ENCODE measurements at regions of chr3 and their contacts with region 1.

Region 1: DNA sequence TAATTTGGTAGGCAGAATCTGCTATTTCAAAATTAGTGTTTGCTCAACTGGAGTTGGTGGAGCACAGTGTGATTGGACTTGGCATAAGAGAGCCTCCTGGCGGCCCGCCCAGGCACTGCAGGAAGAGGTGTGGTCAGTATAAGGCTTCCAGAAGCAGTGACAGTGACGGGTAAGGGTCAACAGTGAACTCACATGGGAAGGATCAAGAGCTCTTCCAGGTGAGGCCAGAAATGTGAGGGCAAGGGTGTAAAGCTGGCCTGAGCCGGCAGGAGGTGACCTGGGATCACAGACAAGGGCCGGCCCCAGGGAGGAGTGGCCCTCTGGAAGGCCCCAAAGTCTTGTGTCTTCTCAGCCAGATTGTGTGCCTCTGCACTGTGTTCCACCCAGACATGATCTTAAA is 93.2 kb upstream of the RNF7 start:
- DNase-seq: peak; percentile 60
- ATAC-seq: peak; percentile 91
- H3K4me3 ChIP-seq: no peak overlapping the region
- H3K27ac ChIP-seq: no peak overlapping the region
- H3K4me1 ChIP-seq: peaks cover 0 to 9% of the 10 kb centered on the region in 2 experiments; a peak in 1 of 4 replicates
- H3K27me3 ChIP-seq: no peaks in the 10 kb centered on the region
- CTCF ChIP-seq: peak; percentile 52 to 94 (median 93); a peak in 5 of 6 replicates
- POLR2A ChIP-seq: no peak
- RAD21 ChIP-seq: peak; percentile 74

Region 2: GRCh38 chr3:141460097-141460704 is 184.7 kb before region 1 on chr3:
- CTCF ChIA-PET with region 1: interaction called, 4 read pairs
- POLR2A ChIA-PET with region 1: no interaction called
- RAD21 ChIA-PET with region 1: no interaction called
- intact Hi-C with region 1: loop called (anchors 10 kb)
- DNase-seq: peak; percentile 75
- ATAC-seq: peak; percentile 100
- H3K4me3 ChIP-seq: no peak overlapping the region
- H3K27ac ChIP-seq: no peak overlapping the region
- H3K4me1 ChIP-seq: peaks cover 0 to 5% of the 10 kb centered on the region in 2 experiments; a peak in 2 of 4 replicates
- H3K27me3 ChIP-seq: no peaks in the 10 kb centered on the region
- CTCF ChIP-seq: peak; percentile 88 to 90 (median 90)
- POLR2A ChIP-seq: no peak
- RAD21 ChIP-seq: peak; percentile 96

Region 3: DNA sequence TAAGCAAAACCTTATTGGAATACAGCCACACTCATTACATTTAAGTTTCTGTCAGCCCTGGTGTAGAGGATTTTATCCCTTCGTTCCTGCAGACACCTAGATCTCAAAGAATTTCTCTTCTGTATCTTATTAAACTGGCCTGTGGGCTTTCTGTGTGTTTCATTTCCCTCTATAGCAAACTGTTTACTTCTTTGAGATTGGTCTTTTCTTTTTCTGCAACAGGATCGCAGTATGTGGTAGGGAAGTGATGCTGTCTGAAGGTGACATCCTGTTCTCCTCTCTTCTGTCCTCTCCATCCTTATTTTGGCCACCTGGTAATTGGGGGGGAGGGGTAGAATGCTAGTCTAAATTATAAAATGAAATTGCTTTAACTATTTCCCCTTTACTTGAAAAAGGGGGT is 257.0 kb after region 1 on chr3:
- CTCF ChIA-PET with region 1: no interaction called
- POLR2A ChIA-PET with region 1: no interaction called
- RAD21 ChIA-PET with region 1: no interaction called
- intact Hi-C with region 1: no loop called
- DNase-seq: no peak
- ATAC-seq: no peak
- H3K4me3 ChIP-seq: no peak overlapping the region
- H3K27ac ChIP-seq: no peak overlapping the region
- H3K4me1 ChIP-seq: no peaks in the 10 kb centered on the region
- H3K27me3 ChIP-seq: no peaks in the 10 kb centered on the region
- CTCF ChIP-seq: no peak
- POLR2A ChIP-seq: no peak
- RAD21 ChIP-seq: no peak

Region 4: GRCh38 chr3:141913150-141913811 is 268.4 kb after region 1 on chr3:
- CTCF ChIA-PET with region 1: no interaction called
- POLR2A ChIA-PET with region 1: no interaction called
- RAD21 ChIA-PET with region 1: no interaction called
- intact Hi-C with region 1: loop called (anchors 10 kb)
- DNase-seq: peak; percentile 34
- ATAC-seq: peak; percentile 75
- H3K4me3 ChIP-seq: no peak overlapping the region
- H3K27ac ChIP-seq: no peak overlapping the region
- H3K4me1 ChIP-seq: no peaks in the 10 kb centered on the region
- H3K27me3 ChIP-seq: no peaks in the 10 kb centered on the region
- CTCF ChIP-seq: peak; percentile 57 to 75 (median 67); a peak in 5 of 6 replicates
- POLR2A ChIP-seq: no peak
- RAD21 ChIP-seq: peak; percentile 74

Measured in HCT116 (cell line).